AG04450 (cell line): ENCODE measurements at regions of chr16 and their contacts with region 1.

Region 1: DNA sequence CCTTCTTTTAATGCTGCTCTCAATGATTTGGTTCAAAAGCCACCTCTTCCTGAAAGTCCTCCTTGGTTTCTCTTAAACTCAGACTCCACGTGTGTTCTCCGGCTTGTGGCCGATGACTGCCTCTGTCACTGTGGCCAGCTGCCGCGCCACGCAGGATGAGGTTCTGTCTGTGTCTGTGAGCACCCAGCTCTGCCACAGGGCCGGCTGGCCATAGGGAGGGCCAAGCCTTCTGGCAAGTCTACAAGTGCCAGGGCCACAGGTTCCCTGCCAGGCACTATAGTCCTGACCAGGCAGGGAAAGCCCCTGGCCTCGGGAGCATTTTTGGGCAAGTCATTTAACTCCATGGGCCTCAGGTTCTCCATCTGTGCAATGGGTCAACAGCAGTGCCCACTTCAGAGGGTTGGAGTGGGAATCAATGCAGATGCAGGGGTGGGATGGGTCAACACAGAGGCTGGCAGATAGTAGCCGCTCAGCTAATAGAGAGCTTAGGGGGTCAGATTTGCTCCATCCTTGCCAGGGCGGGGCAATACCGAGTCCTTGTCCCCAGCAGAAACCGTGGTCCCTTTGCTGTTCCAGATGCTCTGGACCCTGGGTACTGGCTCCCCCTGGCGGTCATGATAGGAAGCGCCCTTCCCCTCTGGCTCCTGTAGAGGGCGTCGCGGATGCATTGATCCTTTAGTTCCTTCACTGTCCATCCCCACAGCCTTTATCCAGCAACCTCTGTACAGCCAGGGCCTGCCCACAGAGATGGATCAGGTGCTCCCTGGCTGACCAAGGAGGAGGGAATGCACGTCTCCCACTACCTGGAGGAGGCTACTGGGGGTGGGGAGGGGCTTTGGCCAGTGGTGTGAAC is 19.3 kb upstream of the ADGRG3 start:
- DNase-seq: peak; percentile 34
- H3K4me3 ChIP-seq: no peak overlapping the region
- H3K27ac ChIP-seq: no peak overlapping the region
- H3K27me3 ChIP-seq: no peaks in the 10 kb centered on the region
- CTCF ChIP-seq: peak; percentile 100

Region 2: GRCh38 chr16:57591086-57591869 is 57.5 kb before region 1 on chr16:
- CTCF ChIA-PET with region 1: interaction called, 94 read pairs
- POLR2A ChIA-PET with region 1: no interaction called
- DNase-seq: no peak
- H3K4me3 ChIP-seq: 0 out of 2 replicates have a peak overlapping the region, but pooled peaks have one; percentile 7
- H3K27ac ChIP-seq: peak overlapping the region; percentile 83
- H3K27me3 ChIP-seq: peaks cover 3% of the 10 kb centered on the region
- CTCF ChIP-seq: peak; percentile 93

Region 3: GRCh38 chr16:57609541-57610401 is 39.0 kb before region 1 on chr16:
- CTCF ChIA-PET with region 1: interaction called, 23 read pairs
- POLR2A ChIA-PET with region 1: interaction called, 4 read pairs
- DNase-seq: no peak
- H3K4me3 ChIP-seq: no peak overlapping the region
- H3K27ac ChIP-seq: no peak overlapping the region
- H3K27me3 ChIP-seq: no peaks in the 10 kb centered on the region
- CTCF ChIP-seq: peak; percentile 26; the same call in 1 of the 2 replicates

Region 4: DNA sequence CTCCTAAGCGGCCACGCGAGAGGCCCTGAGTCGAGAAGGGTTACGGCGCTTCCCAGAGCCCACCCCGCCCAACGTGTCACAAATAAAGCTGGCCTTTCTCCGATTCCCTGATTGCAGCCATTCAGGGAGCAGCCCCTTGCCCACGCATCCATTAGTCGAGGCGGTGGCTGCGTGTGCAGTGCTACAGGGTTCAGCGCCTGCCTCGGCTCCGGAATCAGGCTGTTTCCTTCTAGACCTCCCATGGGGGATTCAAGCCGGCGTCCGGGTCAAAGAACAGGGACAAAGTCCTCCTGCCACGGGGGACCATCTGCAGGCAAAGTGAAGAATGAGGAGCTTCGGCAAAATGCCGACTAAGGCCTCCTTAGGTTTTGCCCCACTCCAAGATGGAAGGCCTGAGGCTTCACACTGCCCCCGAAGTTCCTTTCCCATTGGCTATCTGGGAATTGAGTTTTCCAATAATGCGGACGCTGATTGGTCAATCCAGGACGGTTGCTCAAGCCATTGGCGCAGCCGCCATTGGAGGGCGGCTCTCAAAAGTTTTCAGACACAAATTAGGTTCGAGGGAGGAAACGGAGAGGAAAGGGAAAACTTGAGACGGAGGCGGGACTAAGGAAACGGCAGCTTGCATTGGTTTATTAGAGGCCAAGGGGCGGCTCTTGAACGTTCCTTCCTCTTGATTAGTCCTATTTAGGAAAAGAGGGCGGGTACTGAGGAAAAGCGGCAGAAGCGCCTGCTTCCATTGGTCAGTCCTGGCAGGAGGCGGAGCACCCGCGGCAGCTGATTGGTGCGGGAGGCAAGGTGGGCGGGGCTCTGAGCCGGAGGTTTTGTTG is 86.3 kb after region 1 on chr16:
- CTCF ChIA-PET with region 1: interaction called, 12 read pairs
- POLR2A ChIA-PET with region 1: interaction called, 3 read pairs
- DNase-seq: peak; percentile 100
- H3K4me3 ChIP-seq: peak overlapping the region; percentile 94
- H3K27ac ChIP-seq: peak overlapping the region; percentile 95
- H3K27me3 ChIP-seq: no peaks in the 10 kb centered on the region
- CTCF ChIP-seq: no peak